Activated CD4-positive, alpha-beta T cell treated with anti-CD3 and anti-CD28 coated beads for 36 hours (primary cell): ENCODE measurements at regions of chr1 and their contacts with region 1.

Region 1: DNA sequence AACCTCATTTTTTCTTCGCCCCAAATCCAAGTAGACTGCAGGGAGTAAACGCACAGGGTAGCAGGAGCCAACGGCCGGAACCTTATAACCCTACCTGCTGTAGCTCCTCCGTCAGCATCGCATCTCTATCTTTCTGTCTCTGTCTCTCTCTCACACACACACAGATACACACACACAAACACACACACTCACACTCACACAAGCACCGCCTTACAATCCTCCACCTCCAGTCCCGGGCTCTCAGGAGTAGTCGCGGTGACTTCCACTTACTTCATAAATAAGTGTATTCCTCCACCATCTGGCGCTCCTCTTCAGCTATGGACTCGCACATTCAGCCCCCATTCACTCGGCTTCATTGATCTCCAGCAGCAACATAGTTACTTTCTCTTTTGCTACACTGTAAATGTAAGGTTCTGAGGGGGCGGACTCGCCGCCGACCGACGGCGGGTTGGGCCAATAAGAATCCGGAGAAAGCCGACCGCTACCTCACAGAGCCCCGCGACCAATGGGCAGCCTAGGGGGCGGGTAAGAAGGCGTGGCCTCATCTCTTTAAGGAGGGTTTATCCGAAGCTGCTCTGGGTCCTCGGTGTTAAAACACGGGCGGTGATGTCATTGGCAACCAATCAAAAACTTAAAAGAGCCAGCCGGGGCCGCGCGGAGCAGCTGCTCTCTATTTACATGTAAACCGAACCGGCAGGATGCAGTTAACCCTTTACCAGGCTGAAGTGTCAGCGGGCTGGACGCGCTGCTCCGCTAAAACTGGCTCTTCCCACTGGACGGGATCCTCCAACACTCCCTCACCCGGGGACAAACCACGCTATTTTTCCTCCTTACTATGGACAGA is at the start of gene DUSP10:
- DNase-seq: peak; percentile 99
- ATAC-seq: peak; percentile 90
- H3K4me3 Mint-ChIP-seq: no peak within 1 kb of the TSS
- H3K27ac Mint-ChIP-seq: no peak within 1 kb of the TSS
- H3K4me1 Mint-ChIP-seq: peaks cover 33% of the 10 kb centered on the region
- H3K27me3 Mint-ChIP-seq: no peaks in the 10 kb centered on the region
- total RNA-seq, gene DUSP10: 7.3 to 9.2 TPM

Region 2: GRCh38 chr1:221435504-221435904 is 306.4 kb before region 1 on chr1:
- CTCF ChIA-PET with region 1: no interaction called
- POLR2A ChIA-PET with region 1: no interaction called
- intact Hi-C with region 1: loop called in 1 of 2 experiments (anchors 1 kb)
- DNase-seq: no peak
- ATAC-seq: no peak
- H3K4me3 Mint-ChIP-seq: no peak overlapping the region
- H3K27ac Mint-ChIP-seq: no peak overlapping the region
- H3K4me1 Mint-ChIP-seq: peaks cover 39% of the 10 kb centered on the region
- H3K27me3 Mint-ChIP-seq: peaks cover 8% of the 10 kb centered on the region

Region 3: GRCh38 chr1:221708987-221709386 is 32.9 kb before region 1 on chr1:
- CTCF ChIA-PET with region 1: interaction called, 7 read pairs
- POLR2A ChIA-PET with region 1: interaction called, 20 read pairs
- intact Hi-C with region 1: loop called (anchors 1 kb)
- DNase-seq: peak; percentile 47
- ATAC-seq: no peak
- H3K4me3 Mint-ChIP-seq: no peak overlapping the region
- H3K27ac Mint-ChIP-seq: peak overlapping the region; percentile 83
- H3K4me1 Mint-ChIP-seq: peaks cover 58% of the 10 kb centered on the region
- H3K27me3 Mint-ChIP-seq: no peaks in the 10 kb centered on the region

Region 4: DNA sequence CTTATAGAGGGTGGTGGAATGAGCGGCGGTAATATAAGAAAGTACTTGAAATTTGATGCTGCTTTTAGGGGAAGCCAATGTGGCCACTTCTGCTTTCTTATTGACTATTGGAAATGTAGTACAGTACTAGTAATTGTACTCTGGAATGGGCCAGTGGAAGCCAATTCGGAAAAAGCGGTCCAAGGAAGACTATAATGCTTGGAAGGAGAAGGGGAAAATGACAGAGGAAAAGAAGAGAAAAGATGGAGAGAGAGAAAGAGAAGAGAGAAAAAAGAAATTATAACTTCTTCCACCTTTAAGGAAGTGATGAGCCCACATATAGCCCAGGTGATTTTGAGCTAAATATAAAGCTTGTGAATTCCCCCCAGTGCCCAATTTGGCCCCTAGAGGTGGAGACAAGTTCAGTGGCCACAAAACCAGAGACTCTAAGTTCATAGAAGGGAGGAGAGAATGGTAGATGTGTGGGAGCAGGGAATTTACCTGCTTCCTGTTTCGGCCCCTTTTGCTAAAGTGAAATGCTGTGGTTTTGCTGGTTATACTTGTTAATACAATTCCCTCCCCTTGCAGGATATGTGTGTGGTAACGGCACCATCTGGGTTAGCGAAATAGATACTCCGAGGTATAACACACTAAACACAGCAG is 35.6 kb after region 1 on chr1:
- CTCF ChIA-PET with region 1: interaction called, 5 read pairs
- POLR2A ChIA-PET with region 1: interaction called, 9 read pairs
- intact Hi-C with region 1: loop called (anchors 1 kb)
- DNase-seq: peak; percentile 62
- ATAC-seq: peak; percentile 76
- H3K4me3 Mint-ChIP-seq: peak overlapping the region; percentile 11
- H3K27ac Mint-ChIP-seq: peak overlapping the region; percentile 87
- H3K4me1 Mint-ChIP-seq: peaks cover 63% of the 10 kb centered on the region
- H3K27me3 Mint-ChIP-seq: no peaks in the 10 kb centered on the region

Region 5: GRCh38 chr1:221816899-221817298 is 75.0 kb after region 1 on chr1:
- CTCF ChIA-PET with region 1: no interaction called
- POLR2A ChIA-PET with region 1: no interaction called
- intact Hi-C with region 1: no loop called
- DNase-seq: no peak
- ATAC-seq: peak; percentile 39
- H3K4me3 Mint-ChIP-seq: no peak overlapping the region
- H3K27ac Mint-ChIP-seq: no peak overlapping the region
- H3K4me1 Mint-ChIP-seq: no peaks in the 10 kb centered on the region
- H3K27me3 Mint-ChIP-seq: no peaks in the 10 kb centered on the region

Region 6: DNA sequence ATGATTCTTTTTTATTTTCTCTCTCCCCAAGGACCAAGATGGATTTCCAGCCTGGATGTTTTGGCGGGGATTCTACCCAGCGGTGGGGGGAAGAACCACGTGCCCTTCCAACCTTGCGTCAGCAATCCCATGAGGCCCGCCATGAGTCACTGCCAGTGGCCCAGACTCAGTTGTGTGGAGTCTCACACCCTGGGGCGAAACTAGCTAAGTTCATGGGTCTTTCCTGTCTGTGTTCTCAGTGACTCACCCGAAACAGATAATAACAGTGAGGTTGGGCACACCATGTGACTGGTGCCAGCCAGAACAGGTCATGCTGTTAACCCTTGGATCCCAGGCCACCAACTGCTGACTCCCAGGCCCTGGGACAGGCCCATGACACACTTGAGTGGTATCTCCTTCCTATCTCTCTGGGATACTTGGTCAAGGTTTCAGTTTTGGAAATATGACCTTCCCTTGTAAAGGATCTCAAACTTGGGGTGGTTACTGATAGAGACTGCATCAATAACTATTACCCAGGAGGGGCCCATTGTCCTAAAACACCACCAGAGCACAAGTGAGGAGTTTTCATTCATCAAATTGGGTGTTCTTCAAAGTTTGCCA is 98.0 kb after region 1 on chr1:
- CTCF ChIA-PET with region 1: interaction called, 3 read pairs
- POLR2A ChIA-PET with region 1: no interaction called
- intact Hi-C with region 1: loop called (anchors 1 to 2 kb)
- DNase-seq: peak; percentile 85
- ATAC-seq: peak; percentile 98
- H3K4me3 Mint-ChIP-seq: no peak overlapping the region
- H3K27ac Mint-ChIP-seq: peak overlapping the region; percentile 85
- H3K4me1 Mint-ChIP-seq: peaks cover 38% of the 10 kb centered on the region
- H3K27me3 Mint-ChIP-seq: peaks cover 6% of the 10 kb centered on the region

Region 7: DNA sequence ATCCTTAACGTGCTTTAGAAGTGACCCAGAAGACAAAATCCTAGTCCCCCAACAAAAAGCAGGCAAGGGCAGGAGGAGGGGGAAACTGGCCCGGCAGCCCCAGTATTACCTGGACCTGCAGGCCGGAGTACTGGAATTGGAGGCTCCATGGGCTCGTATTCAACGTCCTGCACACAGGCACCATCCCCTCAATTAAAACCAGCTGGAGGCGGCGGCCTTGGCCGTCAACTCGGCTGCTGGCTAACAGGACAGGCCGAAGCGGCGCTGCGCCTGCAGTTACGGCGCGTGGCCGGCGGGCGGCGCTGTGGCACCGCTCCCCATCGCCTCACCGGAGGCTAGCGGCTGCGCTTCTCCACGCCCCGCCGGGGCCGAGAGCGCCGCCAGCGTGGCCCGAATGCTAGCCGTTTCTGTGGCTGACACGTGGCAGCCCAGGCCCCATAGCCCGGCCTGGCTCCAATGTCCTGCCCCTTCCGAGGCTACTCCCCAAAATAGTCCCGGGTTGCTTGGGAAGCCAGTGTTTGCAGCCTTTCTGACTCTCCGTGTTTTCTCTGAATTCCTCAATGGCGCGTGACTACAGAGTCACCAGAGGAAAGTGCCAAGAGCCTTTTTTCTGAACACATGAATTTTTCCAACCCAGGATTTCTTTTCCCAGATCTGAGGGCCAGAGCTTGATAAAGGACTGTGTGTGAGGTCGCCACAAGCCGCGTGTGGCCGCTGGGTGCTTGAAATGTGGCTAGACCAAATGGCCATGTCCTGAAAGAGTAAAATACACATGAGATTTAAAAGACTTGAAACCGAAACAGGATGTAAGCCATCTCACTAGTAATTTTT is 723.5 kb after region 1 on chr1:
- CTCF ChIA-PET with region 1: no interaction called
- POLR2A ChIA-PET with region 1: no interaction called
- intact Hi-C with region 1: loop called in 1 of 2 experiments (anchors 10 kb)
- DNase-seq: peak; percentile 88
- ATAC-seq: peak; percentile 93
- H3K4me3 Mint-ChIP-seq: peak overlapping the region; percentile 63
- H3K27ac Mint-ChIP-seq: peak overlapping the region; percentile 85
- H3K4me1 Mint-ChIP-seq: peaks cover 11% of the 10 kb centered on the region
- H3K27me3 Mint-ChIP-seq: no peaks in the 10 kb centered on the region

Region 8: DNA sequence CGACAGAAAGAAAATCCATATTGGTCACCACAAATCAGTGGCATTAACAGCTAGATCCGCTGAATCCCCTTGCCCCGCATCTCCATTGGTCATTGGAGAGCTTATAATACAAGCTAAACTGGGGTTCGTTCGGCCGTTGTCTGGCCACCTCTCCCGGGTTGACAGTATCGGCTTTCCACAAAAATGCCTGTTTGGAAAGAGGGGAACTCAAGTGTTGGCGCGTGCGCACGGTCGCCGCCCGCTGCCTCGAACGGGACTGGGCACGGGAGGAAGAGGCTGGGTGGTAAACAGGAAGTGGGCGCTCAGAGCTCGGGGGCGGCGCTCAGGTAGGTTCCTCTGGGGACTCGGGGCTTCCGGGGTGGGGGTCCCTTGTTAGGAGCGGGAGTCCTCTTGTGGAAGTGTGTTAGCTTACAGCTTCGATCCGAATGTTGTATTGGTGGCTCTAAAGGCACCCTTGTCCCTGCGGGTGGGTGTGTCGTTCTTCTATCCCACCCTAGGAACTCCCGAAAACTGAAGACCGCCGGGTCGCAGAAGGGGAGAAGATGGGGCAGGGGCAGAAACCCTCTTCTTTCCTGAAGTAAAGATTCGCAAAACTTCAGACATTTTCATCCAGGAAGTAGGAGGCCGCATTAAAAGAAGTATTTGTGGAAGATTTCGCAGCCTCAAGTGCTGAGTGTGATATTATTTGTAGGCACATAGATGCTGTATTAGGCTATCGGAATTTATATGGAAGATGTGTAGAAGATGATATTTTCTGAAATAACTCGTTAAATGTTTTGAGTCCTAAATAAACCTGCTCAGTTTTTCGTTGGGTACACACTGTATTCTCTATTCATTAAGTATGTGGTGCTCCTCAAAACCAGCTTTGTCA is 971.4 kb after region 1 on chr1:
- CTCF ChIA-PET with region 1: no interaction called
- POLR2A ChIA-PET with region 1: no interaction called
- intact Hi-C with region 1: loop called in 1 of 2 experiments (anchors 2 kb)
- DNase-seq: peak; percentile 92
- ATAC-seq: peak; percentile 68
- H3K4me3 Mint-ChIP-seq: peak overlapping the region; percentile 98
- H3K27ac Mint-ChIP-seq: peak overlapping the region; percentile 100
- H3K4me1 Mint-ChIP-seq: peaks cover 37% of the 10 kb centered on the region
- H3K27me3 Mint-ChIP-seq: no peaks in the 10 kb centered on the region